Activated CD4-positive, alpha-beta memory T cell treated with anti-CD3 and anti-CD28 coated beads for 36 hours (primary cell): ENCODE measurements at regions of chr1 and their contacts with region 1.

Region 1: GRCh38 chr1:42335050-42335808 is at the start of gene FOXJ3:
- DNase-seq: peak; percentile 94
- H3K4me3 Mint-ChIP-seq: peak within 1 kb of the TSS; percentile 96
- H3K27ac Mint-ChIP-seq: peak within 1 kb of the TSS; percentile 90
- H3K4me1 Mint-ChIP-seq: peaks cover 39% of the 10 kb centered on the region
- H3K27me3 Mint-ChIP-seq: no peaks in the 10 kb centered on the region
- total RNA-seq, gene FOXJ3: 37.3 to 40.8 TPM

Region 2: DNA sequence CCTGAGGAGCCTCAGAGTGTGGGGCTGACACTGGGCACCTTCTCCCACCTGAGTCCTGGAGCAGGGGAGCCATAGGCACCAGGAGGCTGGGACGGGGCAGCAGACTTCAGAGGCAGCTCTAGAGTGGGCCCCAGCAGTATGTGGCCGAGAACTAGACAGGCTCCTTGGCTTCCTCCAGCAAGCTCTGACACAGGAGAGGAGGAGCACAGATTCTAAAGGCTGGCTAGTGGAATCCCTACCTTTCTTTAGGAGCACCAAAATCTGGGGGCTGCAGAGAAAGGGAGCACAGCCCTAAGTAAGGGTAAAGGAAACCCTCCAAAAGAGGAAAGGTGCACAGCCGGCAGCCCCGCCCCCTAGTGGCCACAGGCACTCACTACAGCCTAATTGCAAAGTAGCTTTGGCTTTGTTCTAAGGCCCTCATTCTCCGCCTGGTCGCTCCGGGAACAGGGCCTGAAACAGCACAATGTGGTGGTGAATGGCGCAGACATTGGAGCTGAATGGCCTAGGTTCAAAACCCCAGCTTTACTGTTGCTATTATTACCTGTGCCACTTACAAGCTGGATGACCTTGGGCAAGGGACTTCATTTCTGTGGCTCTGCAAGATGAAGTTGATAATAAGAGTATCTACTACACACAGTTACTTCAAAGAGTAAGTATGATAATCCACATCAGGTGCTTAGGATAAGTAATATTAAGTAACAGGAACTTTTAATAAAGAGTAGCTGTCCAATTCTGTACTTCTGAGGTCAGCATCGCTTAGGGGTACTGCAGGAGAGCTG is 161.9 kb before region 1 on chr1:
- CTCF ChIA-PET with region 1: interaction called, 9 read pairs
- POLR2A ChIA-PET with region 1: no interaction called
- intact Hi-C with region 1: loop called (anchors 5 kb)
- DNase-seq: peak; percentile 74
- H3K4me3 Mint-ChIP-seq: no peak overlapping the region
- H3K27ac Mint-ChIP-seq: no peak overlapping the region
- H3K4me1 Mint-ChIP-seq: no peaks in the 10 kb centered on the region
- H3K27me3 Mint-ChIP-seq: no peaks in the 10 kb centered on the region

Region 3: DNA sequence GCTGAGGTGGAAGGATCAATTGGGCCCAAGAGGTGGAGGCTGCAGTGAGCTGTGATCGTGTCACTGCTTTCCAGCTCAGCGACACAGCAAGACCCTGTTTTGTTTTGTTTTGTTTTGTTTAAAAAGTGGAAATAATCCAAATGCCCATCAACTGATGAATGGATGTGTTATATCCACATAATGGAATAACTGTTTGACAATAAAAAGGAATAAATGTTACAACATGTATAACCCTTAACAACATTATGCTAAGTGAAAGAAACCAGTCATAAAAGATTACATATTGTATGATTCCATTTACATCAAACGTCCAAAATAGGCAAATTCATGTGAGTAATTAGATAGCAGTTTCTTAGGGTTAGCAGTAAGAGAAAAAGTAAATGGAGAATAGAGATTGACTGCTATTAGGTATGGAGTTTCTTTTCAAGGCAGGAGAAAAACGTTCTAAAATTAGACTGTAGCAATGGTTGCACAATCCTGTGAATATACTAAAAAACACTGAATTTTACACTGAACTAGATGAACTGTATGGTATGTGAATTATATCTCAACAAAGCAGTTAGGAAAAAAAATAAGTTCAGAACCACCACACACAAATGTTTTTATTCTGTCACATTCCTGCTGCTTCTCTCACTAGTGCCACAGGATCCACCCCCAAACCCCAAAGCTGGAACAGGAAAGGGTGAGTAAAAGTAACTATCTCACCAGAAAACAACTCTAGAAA is 15.9 kb before region 1 on chr1:
- CTCF ChIA-PET with region 1: interaction called, 5 read pairs
- POLR2A ChIA-PET with region 1: no interaction called
- intact Hi-C with region 1: loop called (anchors 1 kb)
- DNase-seq: peak; percentile 48
- H3K4me3 Mint-ChIP-seq: peak overlapping the region; percentile 58
- H3K27ac Mint-ChIP-seq: peak overlapping the region; percentile 86
- H3K4me1 Mint-ChIP-seq: peaks cover 90% of the 10 kb centered on the region
- H3K27me3 Mint-ChIP-seq: no peaks in the 10 kb centered on the region

Region 4: DNA sequence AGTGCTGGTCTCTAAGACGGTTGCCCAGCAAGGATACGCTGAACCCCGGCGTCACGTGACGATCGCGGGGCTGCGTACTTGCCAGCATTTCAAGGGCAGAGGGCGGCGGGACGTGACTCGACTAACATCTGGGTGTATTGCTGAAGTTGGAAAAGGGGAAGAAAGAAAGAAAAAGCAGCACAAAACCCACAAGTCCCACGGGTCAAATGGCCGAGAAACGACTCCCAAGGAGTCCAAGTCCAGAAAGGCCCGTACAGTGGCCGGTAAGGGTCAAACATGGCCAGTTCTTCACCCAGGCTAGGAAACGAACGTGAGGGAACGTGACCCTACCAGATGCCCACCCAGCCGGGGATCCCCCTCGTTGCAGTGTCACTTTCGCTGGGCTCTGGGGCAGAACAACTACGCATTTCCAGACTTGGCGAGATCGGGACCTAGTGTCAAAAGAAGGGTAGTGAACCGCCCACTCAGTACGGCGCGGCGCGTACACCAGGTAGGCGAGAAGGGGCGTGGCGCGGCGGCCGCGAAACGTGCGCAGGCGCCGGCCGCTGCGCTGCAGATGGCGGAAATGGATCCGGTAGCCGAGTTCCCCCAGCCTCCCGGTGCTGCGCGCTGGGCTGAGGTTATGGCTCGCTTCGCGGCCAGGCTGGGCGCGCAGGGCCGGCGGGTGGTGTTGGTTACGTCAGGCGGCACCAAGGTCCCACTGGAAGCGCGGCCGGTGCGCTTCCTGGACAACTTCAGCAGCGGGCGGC is 121.0 kb after region 1 on chr1 and contains the starts of genes PPCS and ZMYND12:
- CTCF ChIA-PET with region 1: interaction called, 3 read pairs
- POLR2A ChIA-PET with region 1: interaction called, 3 read pairs
- intact Hi-C with region 1: loop called (anchors 1 kb)
- DNase-seq: peak; percentile 95
- H3K4me3 Mint-ChIP-seq: peak within 1 kb of the TSS; percentile 79
- H3K27ac Mint-ChIP-seq: peak within 1 kb of the TSS; percentile 91
- H3K4me1 Mint-ChIP-seq: peaks cover 23% of the 10 kb centered on the region
- H3K27me3 Mint-ChIP-seq: no peaks in the 10 kb centered on the region
- total RNA-seq, gene PPCS: 50.8 to 52.3 TPM
- total RNA-seq, gene ZMYND12: 0.97 to 1.3 TPM

Region 5: GRCh38 chr1:42681741-42682483 is 346.7 kb after region 1 on chr1 and contains the start of gene YBX1:
- CTCF ChIA-PET with region 1: no interaction called
- POLR2A ChIA-PET with region 1: no interaction called
- intact Hi-C with region 1: loop called (anchors 2 kb)
- DNase-seq: peak; percentile 97
- H3K4me3 Mint-ChIP-seq: peak within 1 kb of the TSS; percentile 93
- H3K27ac Mint-ChIP-seq: peak within 1 kb of the TSS; percentile 97
- H3K4me1 Mint-ChIP-seq: peaks cover 45% of the 10 kb centered on the region
- H3K27me3 Mint-ChIP-seq: no peaks in the 10 kb centered on the region
- total RNA-seq, gene YBX1: 1,101 to 1,134 TPM

Region 6: GRCh38 chr1:42736150-42736850 is 401.1 kb after region 1 on chr1:
- CTCF ChIA-PET with region 1: no interaction called
- POLR2A ChIA-PET with region 1: no interaction called
- intact Hi-C with region 1: loop called (anchors 10 kb)
- DNase-seq: peak; percentile 17
- H3K4me3 Mint-ChIP-seq: no peak overlapping the region
- H3K27ac Mint-ChIP-seq: no peak overlapping the region
- H3K4me1 Mint-ChIP-seq: peaks cover 5% of the 10 kb centered on the region
- H3K27me3 Mint-ChIP-seq: no peaks in the 10 kb centered on the region

Region 7: DNA sequence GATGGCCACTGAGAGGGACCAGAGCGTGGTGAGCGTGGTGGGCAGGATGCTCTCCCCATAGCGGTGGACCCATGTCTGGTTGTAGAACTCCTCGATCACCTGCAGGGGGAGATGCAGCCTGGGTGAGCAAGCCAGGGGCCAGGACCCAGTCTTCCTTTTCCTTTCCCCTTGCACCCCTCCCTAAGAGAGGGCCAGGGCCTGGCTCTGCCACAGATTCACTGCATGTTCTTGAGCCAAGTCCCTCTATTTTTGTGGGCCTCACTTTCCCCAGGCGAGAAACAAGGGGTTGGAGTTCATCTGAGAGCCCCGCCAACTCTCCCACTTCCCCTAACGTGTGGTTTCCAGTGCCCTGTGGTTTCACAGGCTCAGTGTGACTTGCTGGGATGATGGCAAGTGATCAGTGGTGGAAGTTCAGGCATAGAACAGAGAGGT is 595.9 kb after region 1 on chr1:
- CTCF ChIA-PET with region 1: no interaction called
- POLR2A ChIA-PET with region 1: no interaction called
- intact Hi-C with region 1: loop called (anchors 10 kb)
- DNase-seq: peak; percentile 70
- H3K4me3 Mint-ChIP-seq: peak overlapping the region; percentile 35
- H3K27ac Mint-ChIP-seq: peak overlapping the region; percentile 98
- H3K4me1 Mint-ChIP-seq: peaks cover 61% of the 10 kb centered on the region
- H3K27me3 Mint-ChIP-seq: no peaks in the 10 kb centered on the region